ENCODE measurements at regions of chr11 and their contacts with region 1.

Region 1: DNA sequence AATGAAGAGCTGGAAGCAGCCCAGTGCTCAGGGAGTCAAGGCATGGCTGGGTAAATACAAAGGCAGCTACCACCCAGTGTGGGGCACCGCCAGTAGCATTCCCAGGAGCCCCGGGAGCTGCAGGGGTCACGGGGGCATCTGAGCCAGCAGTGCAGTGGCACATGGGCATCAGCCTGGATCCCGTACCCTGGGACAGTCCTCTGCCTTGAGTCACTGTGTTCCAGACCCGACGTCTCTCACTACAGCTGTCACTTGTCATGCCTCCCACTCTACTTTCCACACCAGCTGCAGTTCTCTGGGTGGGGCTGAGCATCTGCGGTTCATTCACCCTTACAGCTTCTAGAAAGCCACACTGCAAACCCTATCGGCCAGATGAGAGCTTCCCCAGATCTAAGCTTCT is 29.6 kb downstream of the DHCR7 start:
- DNase-seq: no peak
- ATAC-seq: no peak
- H3K4me3 ChIP-seq: no peak overlapping the region
- H3K27ac ChIP-seq: no peak overlapping the region
- H3K4me1 ChIP-seq: no peaks in the 10 kb centered on the region
- H3K27me3 ChIP-seq: no peaks in the 10 kb centered on the region
- CTCF ChIP-seq: no peak

Region 2: DNA sequence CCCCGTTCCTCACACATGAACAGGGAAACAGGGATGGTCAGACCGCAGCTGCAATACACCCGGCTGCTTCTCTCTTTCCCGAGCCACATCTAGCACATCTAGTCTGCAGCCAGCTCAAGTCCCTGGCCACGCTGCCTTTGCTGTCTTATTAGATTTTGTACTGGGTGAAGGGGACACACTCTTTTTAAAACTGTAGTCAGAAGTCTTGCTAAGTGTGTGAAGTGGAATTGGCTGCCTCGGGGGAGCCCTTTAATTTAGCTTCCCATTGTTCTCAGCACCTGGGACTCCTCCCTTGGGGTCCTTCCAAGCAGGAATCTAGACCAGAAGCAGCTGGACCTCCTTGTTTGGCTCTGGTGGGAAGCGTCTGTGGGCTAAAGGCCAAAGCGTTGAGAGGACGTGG is 600.3 kb before region 1 on chr11:
- intact Hi-C with region 1: loop called in 1 of 3 experiments (anchors 10 kb)
- DNase-seq: no peak
- ATAC-seq: no peak
- H3K4me3 ChIP-seq: no peak overlapping the region
- H3K27ac ChIP-seq: no peak overlapping the region
- H3K4me1 ChIP-seq: no peaks in the 10 kb centered on the region
- H3K27me3 ChIP-seq: no peaks in the 10 kb centered on the region
- CTCF ChIP-seq: no peak

Region 3: DNA sequence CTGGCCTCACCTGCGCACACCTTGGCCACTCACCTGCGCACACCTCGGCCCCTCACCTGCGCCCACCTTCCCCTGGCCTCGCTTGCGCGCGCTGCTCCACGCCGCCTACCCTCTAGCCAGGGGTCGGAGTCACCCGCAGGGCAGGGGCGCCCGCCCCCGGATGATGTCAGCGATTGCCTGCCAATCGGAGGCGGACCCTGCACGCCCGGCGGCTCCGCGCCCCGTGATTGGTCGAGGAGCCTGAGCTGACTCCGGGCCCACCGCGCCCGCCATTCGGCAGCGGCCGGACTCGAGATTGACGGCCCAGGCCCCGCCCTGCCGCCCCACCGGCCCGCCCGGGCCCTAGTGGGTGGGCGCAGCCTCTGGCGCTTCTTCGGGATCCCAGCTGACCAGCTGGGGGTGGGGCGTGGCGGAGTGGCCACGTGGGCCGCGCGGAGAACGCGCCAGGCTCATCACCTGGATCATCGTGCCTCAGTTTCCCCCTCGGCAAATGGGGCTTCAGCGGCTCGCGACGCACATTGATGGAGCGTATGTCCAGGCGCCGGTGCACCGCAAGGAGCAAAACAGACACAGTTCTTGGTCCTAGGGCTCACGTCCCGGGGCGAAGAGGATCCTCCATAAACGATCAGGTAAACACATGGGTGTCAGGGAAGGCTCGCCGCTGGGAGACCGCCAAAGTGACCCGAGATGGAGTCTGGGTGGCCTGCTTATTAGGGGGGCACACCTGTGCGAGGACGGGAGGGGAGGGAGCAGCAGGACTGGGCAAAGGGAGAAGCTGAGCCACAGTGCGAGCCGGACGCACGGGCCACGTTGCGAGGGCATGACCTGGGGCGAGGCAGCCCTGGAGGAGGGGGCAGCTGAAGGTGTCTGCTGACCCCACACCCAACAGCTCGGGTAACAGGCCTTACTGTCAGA is 29.9 kb after region 1 on chr11 and contains the start of gene DHCR7:
- intact Hi-C with region 1: no loop called
- DNase-seq: peak; percentile 94 to 98 (median 96)
- ATAC-seq: peak; percentile 78 to 88 (median 84)
- H3K4me3 ChIP-seq: peak within 1 kb of the TSS; percentile 79 to 90 (median 84)
- H3K27ac ChIP-seq: peak within 1 kb of the TSS; percentile 59 to 73 (median 67)
- H3K4me1 ChIP-seq: peaks cover 7 to 11% (median 11%) of the 10 kb centered on the region in 3 donors
- H3K27me3 ChIP-seq: no peaks in the 10 kb centered on the region
- CTCF ChIP-seq: peak in 1 of 4 donors; percentile 16
- total RNA-seq, gene DHCR7: 5.7 to 19.8 (median 13.5) TPM

Measured in pancreas (tissue), 10 donors.